ENCODE measurements at regions of chr11 and their contacts with region 1.

Region 1: GRCh38 chr11:34926101-34926830 is 9.8 kb downstream of the PDHX start:
- DNase-seq: no peak
- H3K4me3 ChIP-seq: no peak overlapping the region
- H3K27ac ChIP-seq: no peak overlapping the region
- H3K4me1 ChIP-seq: peaks cover 0 to 63% (median 49%) of the 10 kb centered on the region in 4 donors
- H3K27me3 ChIP-seq: no peaks in the 10 kb centered on the region
- CTCF ChIP-seq: peak; percentile 43 to 70 (median 60)
- EP300 ChIP-seq: no peak
- POLR2A ChIP-seq: no peak

Region 2: DNA sequence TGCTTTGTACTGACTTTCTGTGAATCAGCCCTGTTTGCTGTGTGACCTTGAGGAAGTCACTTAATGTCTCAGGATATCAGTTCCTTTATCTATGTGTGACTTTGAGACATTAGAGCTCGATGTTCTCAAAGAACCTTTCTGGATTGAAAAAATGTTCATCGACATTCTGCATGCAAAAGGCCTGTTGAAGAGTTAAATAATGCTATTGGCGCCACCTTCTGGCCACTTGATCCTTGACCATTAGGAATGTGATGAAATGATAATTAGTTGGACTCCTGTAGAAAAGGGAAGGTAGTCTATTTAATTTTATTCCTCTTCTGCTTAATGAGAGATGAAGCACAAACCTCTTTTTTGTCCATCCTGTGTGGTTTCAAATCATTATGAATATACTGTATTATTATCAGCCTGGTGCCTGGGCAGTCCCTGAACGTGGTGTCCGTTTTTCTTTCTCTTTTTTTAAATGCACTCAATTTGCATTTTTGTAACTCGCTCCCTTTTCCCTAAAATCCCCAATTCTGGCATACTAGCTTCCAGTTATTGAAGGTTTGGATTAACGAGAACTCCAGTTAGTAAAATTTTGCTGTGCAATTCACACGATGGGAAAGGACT is 433.4 kb before region 1 on chr11:
- intact Hi-C with region 1: no loop called
- DNase-seq: no peak
- H3K4me3 ChIP-seq: no peak overlapping the region
- H3K27ac ChIP-seq: no peak overlapping the region
- H3K4me1 ChIP-seq: no peaks in the 10 kb centered on the region
- H3K27me3 ChIP-seq: no peaks in the 10 kb centered on the region
- CTCF ChIP-seq: peak in 2 of 4 experiments; percentile 37 to 42
- EP300 ChIP-seq: no peak
- POLR2A ChIP-seq: no peak

Region 3: DNA sequence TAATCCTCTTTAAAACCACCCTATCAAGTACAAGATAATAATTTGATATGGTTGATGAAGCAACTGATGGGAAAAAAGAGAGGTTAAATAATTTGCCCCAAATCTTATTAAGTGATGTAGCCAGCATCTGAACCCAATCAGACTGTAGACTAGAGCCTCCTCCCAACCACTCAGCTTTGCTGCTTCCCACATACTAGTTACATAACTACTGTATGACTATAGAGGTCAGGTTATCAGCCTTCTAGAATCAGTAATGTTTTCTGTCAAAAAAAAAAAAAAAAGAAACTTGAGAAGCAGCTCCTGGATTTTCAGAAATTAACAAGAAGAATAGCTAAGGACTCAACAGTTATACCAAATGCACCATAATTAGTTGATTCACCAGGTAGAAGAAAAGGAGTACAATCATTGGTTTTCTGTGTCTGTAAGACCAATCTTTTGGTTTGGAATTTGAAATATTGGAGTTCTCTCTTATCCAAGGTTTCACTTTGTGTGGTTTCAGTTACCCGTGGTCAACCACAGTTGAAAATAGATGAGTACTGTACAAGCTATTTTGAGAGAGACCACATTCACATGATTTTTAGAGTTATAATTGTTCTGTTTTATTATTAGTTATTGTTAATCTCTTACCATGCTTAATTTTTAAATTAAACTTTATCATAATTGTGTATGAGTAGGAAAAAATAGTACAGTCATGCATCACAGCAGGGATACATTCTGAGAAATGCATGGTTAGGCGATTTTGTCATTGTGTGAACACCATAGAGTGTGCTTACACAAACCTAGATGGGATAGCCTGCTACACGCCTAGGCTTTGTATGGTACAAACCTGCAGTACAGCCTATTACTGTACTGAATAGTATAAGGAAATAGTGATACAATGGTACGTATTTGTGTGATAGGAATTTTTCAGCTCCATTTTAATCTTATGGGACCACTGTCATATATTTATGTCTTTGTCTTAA is 62.3 kb after region 1 on chr11:
- intact Hi-C with region 1: loop called (anchors 10 kb)
- DNase-seq: no peak
- H3K4me3 ChIP-seq: no peak overlapping the region
- H3K27ac ChIP-seq: no peak overlapping the region
- H3K4me1 ChIP-seq: no peaks in the 10 kb centered on the region
- H3K27me3 ChIP-seq: no peaks in the 10 kb centered on the region
- CTCF ChIP-seq: no peak
- EP300 ChIP-seq: no peak
- POLR2A ChIP-seq: no peak

Region 4: DNA sequence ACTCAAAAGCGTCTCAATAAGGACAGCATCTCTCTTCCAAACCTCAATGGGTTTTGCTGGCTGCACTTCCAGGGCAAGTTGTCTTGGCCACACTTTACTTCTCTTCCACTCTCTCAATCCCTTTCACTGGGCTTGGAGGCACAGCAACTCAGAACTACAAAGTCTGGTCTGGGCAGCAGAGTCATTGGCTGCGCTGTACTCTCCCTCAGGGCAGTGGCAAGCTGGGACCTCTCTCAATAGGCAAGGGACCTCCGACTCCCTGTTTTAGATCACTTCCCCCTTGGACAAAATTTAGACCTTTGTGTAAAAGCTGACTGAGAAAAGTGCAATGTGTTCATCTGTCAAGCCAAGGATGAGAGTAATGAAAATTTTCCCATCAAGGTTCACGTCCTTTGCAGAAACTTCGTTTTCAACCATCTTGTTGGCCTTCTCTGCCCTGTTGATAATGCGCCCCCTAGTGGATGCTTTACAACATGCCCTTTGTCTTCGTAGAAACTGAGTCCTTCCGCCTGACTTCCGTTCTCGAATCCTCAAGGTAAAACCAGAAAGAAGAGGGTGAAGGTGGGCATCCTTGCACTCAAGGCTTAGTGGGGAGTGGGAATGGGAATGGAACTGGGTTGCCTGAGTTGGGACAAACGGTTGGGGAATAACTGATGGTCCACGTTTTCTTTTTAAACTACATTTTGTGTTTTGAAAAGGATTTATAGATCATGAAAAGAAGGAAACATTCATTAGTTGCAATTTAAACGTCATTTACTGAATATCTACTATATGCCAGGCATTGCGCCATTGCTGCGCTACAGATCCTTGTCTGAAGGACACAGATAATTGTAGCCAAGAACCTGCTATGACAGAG is 311.8 kb after region 1 on chr11:
- intact Hi-C with region 1: loop called (anchors 10 kb)
- DNase-seq: no peak
- H3K4me3 ChIP-seq: no peak overlapping the region
- H3K27ac ChIP-seq: no peak overlapping the region
- H3K4me1 ChIP-seq: peaks cover 0 to 28% (median 12%) of the 10 kb centered on the region in 4 donors
- H3K27me3 ChIP-seq: no peaks in the 10 kb centered on the region
- CTCF ChIP-seq: peak in 3 of 4 experiments; percentile 46 to 60 (median 49)
- EP300 ChIP-seq: no peak
- POLR2A ChIP-seq: no peak

Region 5: DNA sequence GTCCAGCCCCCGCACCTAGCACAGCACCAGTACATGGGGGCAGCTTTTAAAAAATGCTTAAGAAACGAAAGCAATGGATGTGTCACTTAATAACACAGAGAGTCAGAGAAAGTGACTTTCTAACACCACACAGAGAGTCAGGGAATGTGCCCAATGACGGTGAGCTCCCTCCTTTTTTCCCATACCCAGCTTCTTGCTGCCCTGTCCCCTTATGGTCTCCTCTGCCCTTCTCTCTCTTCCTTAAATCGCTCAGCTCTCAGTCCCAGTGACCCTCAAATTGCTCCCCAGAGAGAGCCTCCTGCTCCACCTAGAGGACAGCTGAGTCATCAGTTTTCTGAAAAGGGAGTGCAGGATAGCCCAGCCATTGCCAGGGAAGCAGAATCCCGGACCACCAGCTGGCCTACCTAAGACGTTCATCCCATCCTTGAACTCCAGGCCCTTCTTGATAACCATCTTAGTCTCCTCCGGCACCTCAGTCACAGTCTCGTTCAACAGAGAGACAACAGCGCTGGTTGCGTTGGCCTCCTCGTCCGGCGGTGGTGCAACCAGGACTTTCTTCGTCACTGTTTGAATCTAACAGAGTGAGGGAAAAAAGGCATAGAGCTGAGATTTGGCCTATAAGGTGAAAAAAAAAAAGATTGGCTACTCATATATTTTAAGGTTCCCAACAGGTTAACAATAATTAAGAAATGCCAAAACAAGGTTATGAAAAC is 379.6 kb after region 1 on chr11:
- intact Hi-C with region 1: loop called (anchors 10 kb)
- DNase-seq: no peak
- H3K4me3 ChIP-seq: no peak overlapping the region
- H3K27ac ChIP-seq: no peak overlapping the region
- H3K4me1 ChIP-seq: peaks cover 0 to 23% (median 9%) of the 10 kb centered on the region in 4 donors
- H3K27me3 ChIP-seq: no peaks in the 10 kb centered on the region
- CTCF ChIP-seq: peak; percentile 21 to 45 (median 43)
- EP300 ChIP-seq: no peak
- POLR2A ChIP-seq: no peak

Region 6: GRCh38 chr11:35391922-35392813 is 465.9 kb after region 1 on chr11:
- intact Hi-C with region 1: loop called (anchors 1 kb)
- DNase-seq: peak; percentile 85
- H3K4me3 ChIP-seq: peak overlapping the region in 2 of 4 donors; percentile 15 to 36
- H3K27ac ChIP-seq: no peak overlapping the region
- H3K4me1 ChIP-seq: peaks cover 0 to 17% (median 7%) of the 10 kb centered on the region in 4 donors
- H3K27me3 ChIP-seq: no peaks in the 10 kb centered on the region
- CTCF ChIP-seq: peak; percentile 78 to 91 (median 84)
- EP300 ChIP-seq: peak in 1 of 4 donors; percentile 11
- POLR2A ChIP-seq: no peak

Region 7: DNA sequence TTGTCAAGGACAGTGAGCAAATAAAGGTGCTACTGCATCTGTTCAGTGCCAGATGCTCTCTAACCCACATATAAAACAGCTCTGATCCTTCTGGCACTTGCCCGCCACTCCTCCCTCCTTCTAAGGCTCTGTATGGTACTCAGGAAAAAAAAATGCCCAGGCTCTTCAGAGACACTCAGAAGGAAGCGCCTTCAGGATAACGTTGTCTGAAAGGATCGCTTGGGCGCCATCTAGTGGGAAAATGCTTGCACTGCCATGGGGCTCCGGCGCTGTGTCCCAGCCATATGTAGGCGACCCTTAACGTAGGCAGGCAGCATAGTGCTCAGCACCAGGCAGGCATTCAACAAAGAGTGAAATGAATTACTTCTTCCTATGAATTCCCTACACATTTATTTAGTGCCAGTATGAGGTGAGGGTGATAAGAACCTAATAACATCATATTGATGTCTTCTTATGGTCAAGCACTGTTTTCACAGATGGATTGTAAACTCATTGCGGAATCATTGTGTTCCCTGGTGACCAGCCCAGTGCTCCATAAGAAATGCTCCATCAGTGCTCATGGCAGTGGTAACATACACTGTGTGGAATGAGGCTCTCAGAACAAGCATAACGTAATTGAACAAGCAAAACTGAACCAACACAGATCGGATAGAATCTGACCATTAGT is 559.5 kb after region 1 on chr11:
- intact Hi-C with region 1: loop called (anchors 1 kb)
- DNase-seq: peak; percentile 79
- H3K4me3 ChIP-seq: no peak overlapping the region
- H3K27ac ChIP-seq: no peak overlapping the region
- H3K4me1 ChIP-seq: peaks cover 0 to 26% (median 9%) of the 10 kb centered on the region in 4 donors
- H3K27me3 ChIP-seq: no peaks in the 10 kb centered on the region
- CTCF ChIP-seq: peak; percentile 49 to 92 (median 77)
- EP300 ChIP-seq: no peak
- POLR2A ChIP-seq: no peak